ENCODE measurements at regions of chr1 and their contacts with region 1.

Region 1: GRCh38 chr1:109687616-109688499 is at the start of gene GSTM1:
- DNase-seq: peak in 3 of 5 donors; percentile 82 to 91 (median 90)
- ATAC-seq: peak in 2 of 4 donors; percentile 96 to 99
- H3K4me3 ChIP-seq: peak within 1 kb of the TSS in 6 of 12 donors; percentile 53 to 78 (median 62)
- H3K27ac ChIP-seq: peak within 1 kb of the TSS in 6 of 12 donors; percentile 57 to 88 (median 84)
- H3K4me1 ChIP-seq: peaks cover 0 to 16% (median 0%) of the 10 kb centered on the region in 12 donors
- H3K27me3 ChIP-seq: no peaks in the 10 kb centered on the region
- CTCF ChIP-seq: peak in 5 of 12 donors; percentile 37 to 80 (median 63)
- POLR2A ChIP-seq: peak in 1 of 2 donors; percentile 62
- total RNA-seq, gene GSTM1: 17.9 to 60.0 (median 26.8) TPM in 5 of 9 donors, not detected in the others

Region 2: GRCh38 chr1:109643385-109644230 is 44.2 kb before region 1 on chr1:
- intact Hi-C with region 1: loop called in 3 of 10 experiments (anchors 5 kb)
- DNase-seq: peak; percentile 78 to 93 (median 85)
- ATAC-seq: peak; percentile 84 to 93 (median 88)
- H3K4me3 ChIP-seq: no peak overlapping the region
- H3K27ac ChIP-seq: peak overlapping the region in 1 of 12 donors; percentile 25
- H3K4me1 ChIP-seq: peaks cover 0 to 12% (median 7%) of the 10 kb centered on the region in 12 donors
- H3K27me3 ChIP-seq: no peaks in the 10 kb centered on the region
- CTCF ChIP-seq: peak; percentile 75 to 92 (median 84)
- POLR2A ChIP-seq: no peak

Region 3: DNA sequence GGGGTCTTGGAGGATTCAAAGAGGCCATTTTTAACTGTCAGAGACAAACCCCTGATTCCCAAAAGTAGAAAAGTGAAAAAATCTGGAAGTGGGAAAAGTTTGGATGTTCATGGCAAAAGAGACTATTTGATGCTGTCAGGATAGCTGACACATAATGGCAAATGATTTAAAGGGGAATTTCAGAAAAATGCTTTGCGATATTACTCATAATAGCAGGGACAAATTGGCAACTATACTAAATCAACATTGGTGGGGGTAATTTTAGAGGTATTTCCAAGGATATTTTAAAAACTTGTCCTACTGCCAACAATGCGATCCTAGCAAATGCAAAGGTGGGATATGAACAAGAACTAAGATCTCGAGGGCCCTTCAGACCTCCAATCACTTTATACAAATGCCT is 37.2 kb before region 1 on chr1:
- intact Hi-C with region 1: loop called in 1 of 10 experiments (anchors 5 kb)
- DNase-seq: no peak
- ATAC-seq: no peak
- H3K4me3 ChIP-seq: no peak overlapping the region
- H3K27ac ChIP-seq: no peak overlapping the region
- H3K4me1 ChIP-seq: peaks cover 0 to 13% (median 7%) of the 10 kb centered on the region in 12 donors
- H3K27me3 ChIP-seq: no peaks in the 10 kb centered on the region
- CTCF ChIP-seq: no peak
- POLR2A ChIP-seq: no peak

Region 4: DNA sequence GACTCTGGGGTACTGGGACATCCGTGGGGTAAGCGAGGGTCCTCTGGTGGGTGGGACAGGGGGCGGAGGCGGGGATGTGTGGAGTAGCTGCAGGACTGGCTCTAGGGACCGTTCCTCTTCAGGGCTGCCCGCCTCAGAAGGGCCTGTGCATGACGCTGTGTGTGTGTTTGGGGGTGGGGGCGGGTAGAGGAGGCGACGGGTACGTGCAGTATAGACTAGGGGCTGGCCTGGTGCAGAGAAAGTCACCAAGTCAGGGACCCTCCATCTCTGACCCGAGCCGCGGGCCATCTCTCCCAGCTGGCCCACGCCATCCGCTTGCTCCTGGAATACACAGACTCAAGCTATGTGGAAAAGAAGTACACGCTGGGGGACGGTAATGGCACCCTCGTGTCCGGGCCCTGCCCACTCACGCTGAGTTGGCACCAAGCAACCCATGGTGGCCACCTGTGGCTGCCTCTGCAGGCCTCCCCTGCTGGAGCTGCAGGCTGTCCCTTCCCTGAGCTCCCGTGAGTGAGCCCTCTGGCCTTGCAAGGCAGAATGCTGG is 24.5 kb after region 1 on chr1:
- intact Hi-C with region 1: no loop called
- DNase-seq: no peak
- ATAC-seq: peak in 3 of 4 donors; percentile 13 to 36 (median 28)
- H3K4me3 ChIP-seq: peak overlapping the region in 10 of 12 donors; percentile 24 to 56 (median 48)
- H3K27ac ChIP-seq: no peak overlapping the region
- H3K4me1 ChIP-seq: peaks cover 0 to 8% (median 0%) of the 10 kb centered on the region in 12 donors
- H3K27me3 ChIP-seq: peaks cover 0 to 7% (median 0%) of the 10 kb centered on the region in 9 donors
- CTCF ChIP-seq: no peak
- POLR2A ChIP-seq: no peak

Measured in heart left ventricle (tissue), 16 donors.